HepG2 (cell line): ENCODE measurements at regions of chr20 and their contacts with region 1.

Region 1: GRCh38 chr20:35601008-35601973 is 14.3 kb upstream of the SPAG4 start:
- DNase-seq: peak; percentile 35
- ATAC-seq: peak; percentile 41
- H3K4me3 ChIP-seq: peak overlapping the region in 1 of 3 experiments; percentile 36; a peak in 1 of 6 replicates
- H3K27ac ChIP-seq: no peak overlapping the region
- H3K4me1 ChIP-seq: peaks cover 26% of the 10 kb centered on the region
- H3K27me3 ChIP-seq: peaks cover 3 to 23% of the 10 kb centered on the region in 2 experiments; a peak in 4 of 5 replicates
- CTCF ChIP-seq: peak; percentile 81
- EP300 ChIP-seq: no peak
- POLR2A ChIP-seq: no peak
- RAD21 ChIP-seq: peak; percentile 60

Region 2: GRCh38 chr20:35568645-35569262 is 32.5 kb before region 1 on chr20:
- CTCF ChIA-PET with region 1: interaction called, 5 read pairs
- POLR2A ChIA-PET with region 1: no interaction called
- in situ Hi-C with region 1: no loop called
- intact Hi-C with region 1: loop called (anchors 1 kb)
- DNase-seq: peak; percentile 78
- ATAC-seq: peak; percentile 95
- H3K4me3 ChIP-seq: no peak overlapping the region
- H3K27ac ChIP-seq: no peak overlapping the region
- H3K4me1 ChIP-seq: no peaks in the 10 kb centered on the region
- H3K27me3 ChIP-seq: no peaks in the 10 kb centered on the region
- CTCF ChIP-seq: peak; percentile 82
- EP300 ChIP-seq: no peak
- POLR2A ChIP-seq: no peak
- RAD21 ChIP-seq: peak; percentile 50; the same call in 1 of the 2 replicates

Region 3: GRCh38 chr20:35583636-35584560 is 17.4 kb before region 1 on chr20:
- CTCF ChIA-PET with region 1: no interaction called
- POLR2A ChIA-PET with region 1: no interaction called
- in situ Hi-C with region 1: no loop called
- intact Hi-C with region 1: no loop called
- DNase-seq: no peak
- ATAC-seq: peak; percentile 49
- H3K4me3 ChIP-seq: no peak overlapping the region
- H3K27ac ChIP-seq: no peak overlapping the region
- H3K4me1 ChIP-seq: no peaks in the 10 kb centered on the region
- H3K27me3 ChIP-seq: peaks cover 0 to 10% of the 10 kb centered on the region in 2 experiments; a peak in 2 of 5 replicates
- CTCF ChIP-seq: no peak
- EP300 ChIP-seq: no peak
- POLR2A ChIP-seq: no peak
- RAD21 ChIP-seq: no peak

Region 4: DNA sequence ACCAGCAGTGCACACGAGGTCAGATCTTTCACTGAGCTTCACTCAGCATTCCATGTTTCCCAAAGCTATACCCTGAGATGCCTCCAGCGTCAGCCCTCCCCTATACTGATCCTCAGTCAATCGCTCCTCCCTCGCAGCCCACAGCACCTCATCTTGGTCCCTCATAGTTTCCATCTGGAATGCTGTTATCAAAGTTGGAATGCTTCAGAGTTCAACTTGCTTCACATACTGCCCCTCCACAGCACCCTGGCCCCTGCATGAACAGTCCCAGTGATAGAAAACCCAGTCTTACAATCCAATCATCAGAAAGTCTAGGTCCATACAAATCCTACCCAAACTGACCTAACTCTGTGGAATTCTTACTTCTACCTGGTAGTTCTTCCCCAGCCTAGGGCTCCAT is 34.4 kb after region 1 on chr20:
- CTCF ChIA-PET with region 1: no interaction called
- POLR2A ChIA-PET with region 1: no interaction called
- in situ Hi-C with region 1: no loop called
- intact Hi-C with region 1: no loop called
- DNase-seq: peak; percentile 76
- ATAC-seq: peak; percentile 76
- H3K4me3 ChIP-seq: no peak overlapping the region
- H3K27ac ChIP-seq: peak overlapping the region; percentile 68
- H3K4me1 ChIP-seq: peaks cover 34% of the 10 kb centered on the region
- H3K27me3 ChIP-seq: no peaks in the 10 kb centered on the region
- CTCF ChIP-seq: no peak
- EP300 ChIP-seq: no peak
- POLR2A ChIP-seq: no peak; a peak in 1 of 4 replicates
- RAD21 ChIP-seq: no peak